SK-N-SH (cell line): ENCODE measurements at regions of chr6 and their contacts with region 1.

Region 1: DNA sequence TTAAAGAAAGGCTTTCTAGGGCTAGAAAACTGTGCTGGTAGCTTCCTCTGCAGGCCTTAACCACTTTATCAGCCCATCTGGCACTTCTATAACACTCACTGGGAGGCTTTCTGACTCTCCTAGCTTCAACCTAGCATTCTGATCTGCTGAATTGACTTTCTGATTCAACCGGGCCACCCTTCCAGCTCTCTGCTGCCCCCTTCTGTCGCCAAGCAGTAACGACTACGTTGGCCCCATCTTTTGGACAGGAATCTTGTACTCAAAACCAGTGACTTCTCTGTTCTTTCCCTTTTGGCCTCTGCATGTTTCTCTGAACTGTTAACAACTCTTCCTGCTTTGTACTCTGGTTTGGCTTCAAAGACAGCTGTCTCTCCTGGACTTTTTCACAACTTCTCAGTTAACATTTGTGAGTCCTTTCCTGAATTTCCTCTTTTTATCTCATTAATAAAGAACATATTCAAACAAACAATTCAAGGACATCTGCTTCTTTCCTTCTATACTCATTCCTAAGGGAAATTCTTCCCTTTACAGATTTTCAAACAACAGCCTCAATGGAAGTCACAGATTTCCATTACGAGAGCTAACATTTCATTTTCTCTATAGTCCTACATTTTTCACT is 43.9 kb upstream of the FAM135A start:
- DNase-seq: peak; percentile 60
- H3K4me3 ChIP-seq: peak overlapping the region in 1 of 2 experiments; percentile 24; a peak in 1 of 4 replicates
- H3K27ac ChIP-seq: no peak overlapping the region
- H3K4me1 ChIP-seq: no peaks in the 10 kb centered on the region; a peak in 2 of 4 replicates
- H3K27me3 ChIP-seq: peaks cover 6% of the 10 kb centered on the region; the same call in 1 of the 2 replicates
- CTCF ChIP-seq: peak; percentile 89
- EP300 ChIP-seq: no peak
- RAD21 ChIP-seq: peak; percentile 85

Region 2: GRCh38 chr6:70231311-70231710 is 138.1 kb before region 1 on chr6:
- CTCF ChIA-PET with region 1: interaction called, 11 read pairs
- POLR2A ChIA-PET with region 1: no interaction called
- DNase-seq: no peak
- H3K4me3 ChIP-seq: no peak overlapping the region
- H3K27ac ChIP-seq: no peak overlapping the region
- H3K4me1 ChIP-seq: no peaks in the 10 kb centered on the region
- H3K27me3 ChIP-seq: 0 out of 2 replicates have a peak, but pooled peaks cover 6% of the 10 kb centered on the region
- CTCF ChIP-seq: no peak
- EP300 ChIP-seq: no peak
- RAD21 ChIP-seq: no peak

Region 3: DNA sequence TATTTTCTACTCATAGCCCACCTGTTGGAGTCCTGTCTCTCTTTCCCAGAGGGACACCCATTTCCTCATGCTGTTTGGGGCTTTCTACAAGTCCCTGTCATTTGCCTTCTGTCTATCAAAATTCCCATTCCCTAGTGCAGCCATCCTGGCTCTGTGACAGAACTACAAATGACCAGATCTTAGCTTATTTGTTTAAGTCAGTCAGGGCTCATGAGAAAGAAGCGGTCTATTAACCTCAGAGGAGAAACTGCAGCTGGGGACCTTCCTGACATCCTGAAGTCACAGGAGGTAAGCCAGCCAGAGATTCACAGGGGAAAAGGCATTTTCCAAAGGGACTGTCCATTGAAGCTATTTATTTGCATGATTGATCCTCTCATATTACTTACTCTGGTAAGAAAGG is 64.8 kb before region 1 on chr6:
- CTCF ChIA-PET with region 1: interaction called, 321 read pairs
- POLR2A ChIA-PET with region 1: no interaction called
- DNase-seq: no peak
- H3K4me3 ChIP-seq: no peak overlapping the region
- H3K27ac ChIP-seq: no peak overlapping the region
- H3K4me1 ChIP-seq: no peaks in the 10 kb centered on the region
- H3K27me3 ChIP-seq: no peaks in the 10 kb centered on the region; the same call in 1 of the 2 replicates
- CTCF ChIP-seq: no peak
- EP300 ChIP-seq: no peak
- RAD21 ChIP-seq: no peak

Region 4: DNA sequence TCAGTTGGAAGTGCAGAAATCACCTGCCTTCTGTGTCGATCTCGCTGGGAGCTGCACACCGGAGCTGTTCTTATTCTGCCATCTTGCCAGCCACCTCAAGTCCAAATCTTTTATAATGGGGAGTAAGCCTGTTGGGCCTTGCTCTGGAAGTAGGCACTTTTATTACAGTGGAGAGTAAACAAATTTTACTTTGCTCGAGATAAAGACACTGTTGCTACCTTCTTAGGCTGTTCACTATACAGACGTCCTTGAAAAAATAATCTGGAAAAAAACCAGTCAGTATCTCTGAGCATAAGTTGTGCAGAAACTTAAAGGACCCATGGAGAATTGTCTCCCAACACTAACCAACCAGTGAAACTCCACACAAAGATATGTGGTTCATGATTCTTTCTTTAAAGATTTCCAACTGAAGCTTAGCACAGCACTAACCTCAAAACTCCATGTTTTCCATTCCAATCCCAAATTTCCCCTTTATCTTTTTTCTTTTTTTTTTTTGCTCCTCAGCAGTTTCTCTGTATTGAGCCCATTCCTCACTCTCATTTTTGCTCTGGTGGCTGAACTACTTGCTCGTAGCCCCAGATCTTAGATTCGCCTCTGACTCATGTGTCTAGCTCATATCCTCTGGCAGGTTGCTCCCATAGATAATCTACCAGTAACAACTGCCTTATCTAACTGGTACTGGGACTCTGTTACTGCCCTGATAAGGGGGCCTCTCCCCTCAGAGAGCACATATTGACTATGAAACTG is 32.3 kb before region 1 on chr6:
- CTCF ChIA-PET with region 1: interaction called, 10 read pairs
- POLR2A ChIA-PET with region 1: no interaction called
- DNase-seq: no peak
- H3K4me3 ChIP-seq: no peak overlapping the region
- H3K27ac ChIP-seq: no peak overlapping the region
- H3K4me1 ChIP-seq: no peaks in the 10 kb centered on the region
- H3K27me3 ChIP-seq: no peaks in the 10 kb centered on the region
- CTCF ChIP-seq: no peak
- EP300 ChIP-seq: no peak
- RAD21 ChIP-seq: no peak

Region 5: GRCh38 chr6:70394518-70395300 is 25.3 kb after region 1 on chr6:
- CTCF ChIA-PET with region 1: interaction called, 26 read pairs
- POLR2A ChIA-PET with region 1: no interaction called
- DNase-seq: no peak
- H3K4me3 ChIP-seq: no peak overlapping the region
- H3K27ac ChIP-seq: no peak overlapping the region
- H3K4me1 ChIP-seq: no peaks in the 10 kb centered on the region
- H3K27me3 ChIP-seq: no peaks in the 10 kb centered on the region
- CTCF ChIP-seq: no peak
- EP300 ChIP-seq: no peak
- RAD21 ChIP-seq: no peak

Region 6: GRCh38 chr6:70863343-70863742 is 493.9 kb after region 1 on chr6:
- CTCF ChIA-PET with region 1: no interaction called
- POLR2A ChIA-PET with region 1: no interaction called
- DNase-seq: no peak
- H3K4me3 ChIP-seq: no peak overlapping the region
- H3K27ac ChIP-seq: no peak overlapping the region
- H3K4me1 ChIP-seq: peaks cover 0 to 4% of the 10 kb centered on the region in 2 experiments; a peak in 1 of 4 replicates
- H3K27me3 ChIP-seq: no peaks in the 10 kb centered on the region
- CTCF ChIP-seq: no peak
- EP300 ChIP-seq: no peak
- RAD21 ChIP-seq: no peak